Activated CD4-positive, alpha-beta memory T cell treated with anti-CD3 and anti-CD28 coated beads for 36 hours (primary cell): ENCODE measurements at regions of chr19 and their contacts with region 1.

Region 1: GRCh38 chr19:48965040-48965805 is at the start of gene FTL:
- DNase-seq: peak; percentile 95
- H3K4me3 Mint-ChIP-seq: peak within 1 kb of the TSS; percentile 89
- H3K27ac Mint-ChIP-seq: peak within 1 kb of the TSS; percentile 93
- H3K4me1 Mint-ChIP-seq: peaks cover 51% of the 10 kb centered on the region
- H3K27me3 Mint-ChIP-seq: no peaks in the 10 kb centered on the region
- total RNA-seq, gene FTL: 870 to 900 TPM

Region 2: DNA sequence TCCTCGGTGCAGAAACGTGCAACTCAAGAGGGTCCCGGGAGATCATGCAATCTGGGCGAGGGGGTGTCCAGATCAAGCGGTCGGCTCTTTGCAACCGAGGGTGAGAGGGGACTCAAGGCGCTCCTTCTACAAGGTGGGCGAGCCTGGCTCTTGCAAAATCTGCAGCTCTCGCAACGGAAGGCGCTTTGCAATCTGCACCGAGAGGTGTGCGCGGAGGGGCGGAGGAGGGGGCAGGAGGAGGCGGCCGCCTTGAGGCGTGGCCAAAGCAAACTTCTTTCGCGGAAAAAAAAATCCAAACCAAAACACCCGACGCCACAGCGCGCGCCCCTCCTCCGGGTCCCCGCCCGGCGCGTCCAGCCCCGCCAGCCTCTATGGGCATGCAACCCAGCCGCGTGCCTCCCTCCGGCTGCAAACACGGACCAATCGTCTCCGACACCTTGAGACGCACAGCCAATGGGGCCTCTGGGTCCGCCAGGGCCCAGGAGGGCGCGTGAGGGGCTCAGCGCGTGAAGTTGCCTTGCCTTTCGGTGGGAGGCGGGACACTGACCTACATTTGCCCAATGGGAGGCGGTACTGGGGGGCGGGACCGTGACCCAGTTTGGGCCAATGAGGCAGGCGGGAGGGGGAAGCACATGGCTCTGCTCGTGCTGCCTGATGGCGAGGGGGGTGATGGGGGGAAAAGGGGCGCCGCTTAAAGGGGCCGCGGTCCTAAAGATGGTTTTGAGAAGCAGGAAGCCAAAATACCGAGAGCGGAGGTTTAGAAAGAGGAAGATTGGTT is 327.9 kb before region 1 on chr19 and contains the start of gene DBP:
- CTCF ChIA-PET with region 1: no interaction called
- POLR2A ChIA-PET with region 1: no interaction called
- intact Hi-C with region 1: loop called (anchors 2 kb)
- DNase-seq: peak; percentile 99
- H3K4me3 Mint-ChIP-seq: peak within 1 kb of the TSS; percentile 87
- H3K27ac Mint-ChIP-seq: peak within 1 kb of the TSS; percentile 98
- H3K4me1 Mint-ChIP-seq: peaks cover 48% of the 10 kb centered on the region
- H3K27me3 Mint-ChIP-seq: no peaks in the 10 kb centered on the region
- total RNA-seq, gene DBP: 8.3 to 10.4 TPM

Region 3: DNA sequence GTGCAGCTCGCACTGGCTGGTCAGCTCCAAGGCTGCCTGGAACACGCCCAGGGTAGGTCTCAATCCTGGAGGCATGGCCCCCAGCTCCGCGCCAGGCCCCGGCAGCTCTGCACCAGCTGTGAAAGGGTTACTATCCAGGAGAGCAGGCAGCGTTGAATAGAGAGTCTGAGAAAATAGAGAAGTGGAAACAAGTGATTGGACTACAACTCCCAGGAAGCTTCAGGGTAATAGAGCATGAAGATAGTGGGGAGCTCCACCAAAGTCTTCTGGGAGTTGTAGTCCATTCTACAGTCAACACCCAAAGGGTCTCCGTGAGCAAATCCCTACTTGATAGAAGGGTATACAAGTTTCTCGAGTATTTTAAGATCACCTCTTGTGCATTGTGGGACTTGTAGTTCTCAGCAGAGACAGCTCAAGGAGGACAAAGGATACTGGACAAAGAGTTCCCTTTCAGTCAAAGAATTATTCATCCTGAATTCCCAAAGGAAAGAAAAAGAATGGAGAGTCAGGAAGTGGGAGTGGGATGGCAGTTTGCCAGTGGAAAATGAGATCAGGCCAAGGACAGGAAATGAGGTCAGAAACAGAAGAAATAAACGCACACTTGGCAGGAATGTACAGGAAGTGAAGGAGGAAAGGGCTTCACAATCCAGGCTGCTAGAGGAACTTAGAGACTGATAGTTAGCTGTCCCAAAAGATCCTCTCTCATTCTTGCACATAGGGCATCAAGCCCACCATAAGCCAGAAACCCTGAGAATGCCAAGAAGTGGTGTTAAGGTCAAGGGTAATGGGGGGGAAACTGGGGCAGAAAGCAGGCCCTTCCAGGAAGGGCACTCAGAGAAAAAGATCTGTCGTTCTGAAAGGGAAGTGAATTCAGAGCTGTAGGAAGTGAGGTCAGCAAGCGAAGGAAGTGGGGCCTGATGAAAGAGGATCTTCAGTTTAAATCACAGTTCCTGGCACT is 240.1 kb before region 1 on chr19:
- CTCF ChIA-PET with region 1: no interaction called
- POLR2A ChIA-PET with region 1: no interaction called
- intact Hi-C with region 1: no loop called
- DNase-seq: no peak
- H3K4me3 Mint-ChIP-seq: peak overlapping the region; percentile 7
- H3K27ac Mint-ChIP-seq: peak overlapping the region; percentile 85
- H3K4me1 Mint-ChIP-seq: peaks cover 17% of the 10 kb centered on the region
- H3K27me3 Mint-ChIP-seq: no peaks in the 10 kb centered on the region

Region 4: GRCh38 chr19:48858984-48859710 is 106.1 kb before region 1 on chr19:
- CTCF ChIA-PET with region 1: no interaction called
- POLR2A ChIA-PET with region 1: no interaction called
- intact Hi-C with region 1: loop called (anchors 5 kb)
- DNase-seq: peak; percentile 90
- H3K4me3 Mint-ChIP-seq: peak overlapping the region; percentile 95
- H3K27ac Mint-ChIP-seq: peak overlapping the region; percentile 80
- H3K4me1 Mint-ChIP-seq: peaks cover 3% of the 10 kb centered on the region
- H3K27me3 Mint-ChIP-seq: no peaks in the 10 kb centered on the region

Region 5: GRCh38 chr19:48899781-48900476 is 65.3 kb before region 1 on chr19 and contains the start of gene NUCB1:
- CTCF ChIA-PET with region 1: interaction called, 6 read pairs
- POLR2A ChIA-PET with region 1: interaction called, 12 read pairs
- intact Hi-C with region 1: loop called (anchors 2 kb)
- DNase-seq: peak; percentile 100
- H3K4me3 Mint-ChIP-seq: peak within 1 kb of the TSS; percentile 96
- H3K27ac Mint-ChIP-seq: peak within 1 kb of the TSS; percentile 97
- H3K4me1 Mint-ChIP-seq: peaks cover 28% of the 10 kb centered on the region
- H3K27me3 Mint-ChIP-seq: peaks cover 7% of the 10 kb centered on the region
- total RNA-seq, gene NUCB1: 154 to 159 TPM